Testis (tissue), 5 donors: ENCODE measurements at regions of chr17 and their contacts with region 1.

Region 1: GRCh38 chr17:40014375-40014980 is 762 bp upstream of the CSF3 start:
- DNase-seq: no peak
- H3K4me3 ChIP-seq: no peak overlapping the region
- H3K27ac ChIP-seq: peak overlapping the region; percentile 14 to 78
- H3K4me1 ChIP-seq: peaks cover 39% of the 10 kb centered on the region
- H3K27me3 ChIP-seq: no peaks in the 10 kb centered on the region
- CTCF ChIP-seq: no peak
- POLR2A ChIP-seq: no peak

Region 2: DNA sequence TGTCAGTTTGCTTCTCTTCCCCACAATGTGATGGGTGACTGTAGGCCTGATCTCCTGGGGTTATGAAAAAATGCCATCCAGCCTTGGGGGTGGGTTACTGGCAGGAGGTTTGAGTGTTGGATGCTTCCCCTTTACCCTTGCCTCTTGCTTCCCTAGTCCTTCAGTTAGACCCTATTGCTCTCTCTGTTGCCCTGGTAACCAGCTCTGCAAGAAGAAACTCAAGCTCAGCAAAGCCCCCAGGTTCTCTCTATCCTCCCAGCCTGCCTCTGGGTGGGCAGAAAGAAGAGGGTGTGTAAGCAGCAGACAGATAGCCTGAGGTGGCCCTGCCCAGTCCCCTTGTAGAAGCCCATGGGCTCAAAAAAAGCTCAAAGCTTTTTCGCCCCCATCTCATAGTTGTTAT is 160.0 kb after region 1 on chr17:
- intact Hi-C with region 1: loop called (anchors 5 kb)
- DNase-seq: no peak
- H3K4me3 ChIP-seq: no peak overlapping the region
- H3K27ac ChIP-seq: no peak overlapping the region
- H3K4me1 ChIP-seq: peaks cover 11% of the 10 kb centered on the region
- H3K27me3 ChIP-seq: no peaks in the 10 kb centered on the region
- CTCF ChIP-seq: no peak
- POLR2A ChIP-seq: no peak